Esophagus muscularis mucosa (tissue), 4 donors: ENCODE measurements at regions of chr1 and their contacts with region 1.

Region 1: GRCh38 chr1:56831871-56832693 is 12.9 kb upstream of the FYB2 start:
- DNase-seq: no peak
- H3K4me3 ChIP-seq: peak overlapping the region in 3 of 4 donors; percentile 12 to 26 (median 19)
- H3K27ac ChIP-seq: peak overlapping the region; percentile 31 to 61 (median 47)
- H3K4me1 ChIP-seq: peaks cover 0 to 10% (median 7%) of the 10 kb centered on the region in 4 donors
- H3K27me3 ChIP-seq: peaks cover 0 to 8% (median 0%) of the 10 kb centered on the region in 4 donors
- CTCF ChIP-seq: peak; percentile 97 to 98 (median 97)
- EP300 ChIP-seq: no peak
- POLR2A ChIP-seq: no peak

Region 2: GRCh38 chr1:56979986-56980755 is 148.1 kb after region 1 on chr1:
- intact Hi-C with region 1: no loop called
- DNase-seq: no peak
- H3K4me3 ChIP-seq: no peak overlapping the region
- H3K27ac ChIP-seq: no peak overlapping the region
- H3K4me1 ChIP-seq: no peaks in the 10 kb centered on the region
- H3K27me3 ChIP-seq: no peaks in the 10 kb centered on the region
- CTCF ChIP-seq: no peak
- EP300 ChIP-seq: no peak
- POLR2A ChIP-seq: no peak

Region 3: GRCh38 chr1:58047265-58047858 is 1215.3 kb after region 1 on chr1:
- intact Hi-C with region 1: loop called (anchors 2 kb)
- DNase-seq: no peak
- H3K4me3 ChIP-seq: no peak overlapping the region
- H3K27ac ChIP-seq: no peak overlapping the region
- H3K4me1 ChIP-seq: no peaks in the 10 kb centered on the region
- H3K27me3 ChIP-seq: no peaks in the 10 kb centered on the region
- CTCF ChIP-seq: peak; percentile 65 to 75 (median 74)
- EP300 ChIP-seq: no peak
- POLR2A ChIP-seq: no peak

Region 4: GRCh38 chr1:58162952-58163550 is 1331.0 kb after region 1 on chr1:
- intact Hi-C with region 1: loop called (anchors 5 kb)
- DNase-seq: no peak
- H3K4me3 ChIP-seq: no peak overlapping the region
- H3K27ac ChIP-seq: no peak overlapping the region
- H3K4me1 ChIP-seq: peaks cover 0 to 8% (median 2%) of the 10 kb centered on the region in 4 donors
- H3K27me3 ChIP-seq: no peaks in the 10 kb centered on the region
- CTCF ChIP-seq: peak; percentile 70 to 87 (median 80)
- EP300 ChIP-seq: no peak
- POLR2A ChIP-seq: no peak